ENCODE measurements at regions of chr6 and their contacts with region 1.

Region 1: GRCh38 chr6:122789182-122790027 is at the start of gene SMPDL3A:
- DNase-seq: peak; percentile 65 to 86 (median 76)
- H3K4me3 ChIP-seq: peak within 1 kb of the TSS; percentile 58 to 94 (median 81)
- H3K27ac ChIP-seq: peak within 1 kb of the TSS; percentile 56 to 99 (median 96)
- H3K27me3 ChIP-seq: no peaks in the 10 kb centered on the region
- CTCF ChIP-seq: peak in 55 of 56 donors; percentile 33 to 80 (median 57)
- total RNA-seq, gene SMPDL3A: 2.8 to 12.6 (median 8.1) TPM

Region 2: GRCh38 chr6:122432816-122433215 is 356.6 kb before region 1 on chr6:
- intact Hi-C with region 1: no loop called
- DNase-seq: no peak
- H3K4me3 ChIP-seq: no peak overlapping the region
- H3K27ac ChIP-seq: no peak overlapping the region
- H3K27me3 ChIP-seq: no peaks in the 10 kb centered on the region
- CTCF ChIP-seq: no peak

Region 3: GRCh38 chr6:122471107-122472021 is 318.0 kb before region 1 on chr6 and contains the start of gene SERINC1:
- intact Hi-C with region 1: no loop called
- DNase-seq: peak; percentile 93 to 96 (median 95)
- H3K4me3 ChIP-seq: peak within 1 kb of the TSS; percentile 59 to 100 (median 89)
- H3K27ac ChIP-seq: peak within 1 kb of the TSS; percentile 63 to 99 (median 95)
- H3K27me3 ChIP-seq: no peaks in the 10 kb centered on the region
- CTCF ChIP-seq: peak in 25 of 56 donors; percentile 3 to 55 (median 21)
- total RNA-seq, gene SERINC1: 227 to 682 (median 537) TPM

Region 4: GRCh38 chr6:122749451-122750050 is 39.9 kb before region 1 on chr6:
- intact Hi-C with region 1: loop called in 1 of 2 experiments (anchors 5 kb)
- DNase-seq: no peak
- H3K4me3 ChIP-seq: no peak overlapping the region
- H3K27ac ChIP-seq: no peak overlapping the region
- H3K27me3 ChIP-seq: no peaks in the 10 kb centered on the region
- CTCF ChIP-seq: no peak

Region 5: DNA sequence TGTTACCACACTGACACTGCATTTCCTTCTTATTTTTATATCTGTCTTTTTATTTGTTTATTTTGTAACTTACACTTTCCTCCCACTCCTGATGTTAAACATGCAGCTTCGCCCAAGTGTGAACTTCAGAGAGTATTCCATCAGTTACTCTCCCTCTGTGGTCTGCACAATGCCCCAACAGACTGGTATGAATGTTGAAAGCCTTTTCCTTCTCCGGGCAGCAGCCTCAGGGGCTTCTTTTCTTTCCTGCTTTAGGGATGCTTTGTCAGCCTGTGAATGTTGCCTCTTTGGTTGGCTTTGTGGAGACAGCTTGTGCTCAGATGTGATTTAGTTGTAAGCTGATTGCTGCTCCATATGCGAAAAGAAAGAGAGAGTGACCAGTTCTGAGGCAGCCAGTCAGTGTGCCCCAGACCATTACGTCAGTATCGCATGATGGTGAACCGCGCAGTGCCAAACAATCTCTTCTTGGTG is 43.7 kb after region 1 on chr6:
- intact Hi-C with region 1: loop called (anchors 2 kb)
- DNase-seq: peak in 9 of 10 donors; percentile 47 to 83 (median 71)
- H3K4me3 ChIP-seq: peak overlapping the region; percentile 17 to 71 (median 50)
- H3K27ac ChIP-seq: peak overlapping the region in 56 of 59 donors; percentile 5 to 92 (median 81)
- H3K27me3 ChIP-seq: no peaks in the 10 kb centered on the region
- CTCF ChIP-seq: peak in 18 of 56 donors; percentile 2 to 41 (median 12)

Measured in dorsolateral prefrontal cortex (tissue), 120 donors.